ENCODE measurements at regions of chr6 and their contacts with region 1.

Region 1: GRCh38 chr6:16092140-16092539 is 36.7 kb upstream of the MYLIP start:
- DNase-seq: no peak
- ATAC-seq: no peak
- H3K4me3 ChIP-seq: no peak overlapping the region
- H3K27ac ChIP-seq: no peak overlapping the region
- H3K4me1 ChIP-seq: no peaks in the 10 kb centered on the region
- H3K27me3 ChIP-seq: no peaks in the 10 kb centered on the region
- CTCF ChIP-seq: no peak
- EP300 ChIP-seq: no peak
- POLR2A ChIP-seq: no peak
- RAD21 ChIP-seq: no peak

Region 2: GRCh38 chr6:16078064-16078463 is 14.1 kb before region 1 on chr6:
- CTCF ChIA-PET with region 1: interaction called, 5 read pairs
- POLR2A ChIA-PET with region 1: interaction called, 6 read pairs
- RAD21 ChIA-PET with region 1: interaction called, 7 read pairs
- SMC1A ChIA-PET with region 1: interaction called, 14 read pairs
- in situ Hi-C with region 1: no loop called
- intact Hi-C with region 1: no loop called
- DNase-seq: peak; percentile 44
- ATAC-seq: peak; percentile 87
- H3K4me3 ChIP-seq: no peak overlapping the region
- H3K27ac ChIP-seq: no peak overlapping the region
- H3K4me1 ChIP-seq: peaks cover 12% of the 10 kb centered on the region
- H3K27me3 ChIP-seq: no peaks in the 10 kb centered on the region
- CTCF ChIP-seq: no peak
- EP300 ChIP-seq: no peak
- POLR2A ChIP-seq: no peak
- RAD21 ChIP-seq: 0 out of 2 replicates have a peak, but pooled peaks have one; percentile 1

Region 3: DNA sequence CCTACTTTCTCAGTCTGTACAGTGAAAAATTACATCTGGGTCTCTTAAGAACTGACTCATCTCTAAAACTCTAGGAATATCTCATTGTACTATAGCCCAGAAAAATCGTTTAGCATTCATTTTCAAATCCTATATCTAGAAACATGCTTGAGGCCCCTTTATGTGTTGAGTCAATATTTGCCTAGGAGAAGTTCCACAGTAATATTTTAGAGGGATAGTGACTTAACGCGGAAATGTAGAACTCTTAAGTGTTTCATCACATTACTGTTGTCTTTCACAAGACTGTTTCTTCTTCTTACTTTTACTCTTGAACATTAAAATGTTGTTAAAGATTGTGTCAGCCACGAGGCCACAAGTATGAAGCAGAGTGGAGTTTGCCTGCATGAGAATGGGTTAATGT is 13.7 kb after region 1 on chr6:
- CTCF ChIA-PET with region 1: interaction called, 10 read pairs
- POLR2A ChIA-PET with region 1: no interaction called
- RAD21 ChIA-PET with region 1: interaction called, 11 read pairs
- SMC1A ChIA-PET with region 1: interaction called, 7 read pairs
- in situ Hi-C with region 1: no loop called
- intact Hi-C with region 1: no loop called
- DNase-seq: no peak
- ATAC-seq: no peak
- H3K4me3 ChIP-seq: no peak overlapping the region
- H3K27ac ChIP-seq: no peak overlapping the region
- H3K4me1 ChIP-seq: no peaks in the 10 kb centered on the region
- H3K27me3 ChIP-seq: no peaks in the 10 kb centered on the region
- CTCF ChIP-seq: no peak
- EP300 ChIP-seq: no peak
- POLR2A ChIP-seq: no peak
- RAD21 ChIP-seq: no peak

Region 4: DNA sequence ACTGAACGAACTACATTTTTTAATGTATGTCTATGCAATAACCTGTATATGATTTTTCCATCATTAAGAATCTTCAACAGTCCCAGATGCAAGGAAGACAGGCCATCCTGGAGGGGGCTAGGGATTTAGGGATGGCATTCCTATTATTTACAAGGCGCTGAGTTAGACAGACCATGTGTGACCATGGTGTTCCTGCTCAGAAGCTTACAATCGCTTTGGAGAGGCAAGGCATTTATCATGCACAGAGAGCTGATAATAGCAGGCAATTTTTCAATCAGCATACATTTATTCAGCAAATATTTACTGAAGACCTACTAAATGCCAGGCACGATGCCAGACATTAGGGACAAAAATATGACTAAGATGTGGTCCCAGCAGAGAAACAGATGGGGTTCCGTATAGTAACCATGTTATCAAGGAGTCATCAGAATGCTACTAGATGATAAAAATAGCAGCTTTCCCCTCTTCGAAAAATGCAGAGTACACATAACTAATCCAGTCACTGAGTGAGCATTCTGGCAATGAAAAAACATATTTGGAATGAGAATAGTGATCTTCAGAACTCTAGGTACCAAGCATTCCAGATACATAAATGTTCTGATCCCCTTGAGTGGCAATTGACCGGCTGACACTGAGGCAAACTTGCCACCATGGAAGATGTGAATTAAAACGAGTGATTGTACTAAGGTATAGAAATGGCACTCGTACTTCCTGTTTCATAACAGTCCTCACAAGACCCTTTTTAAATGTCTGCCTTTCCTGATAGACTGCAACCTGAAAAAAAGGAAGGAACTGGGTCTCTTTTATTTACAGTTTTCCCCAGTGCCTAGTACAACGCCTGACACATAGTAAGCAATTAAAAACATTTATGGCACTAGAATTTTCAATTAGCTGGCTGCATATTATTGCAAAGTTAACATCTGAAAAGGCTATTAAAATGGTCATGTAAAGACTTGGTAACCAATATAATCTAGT is 533.4 kb after region 1 on chr6:
- CTCF ChIA-PET with region 1: no interaction called
- POLR2A ChIA-PET with region 1: no interaction called
- RAD21 ChIA-PET with region 1: no interaction called
- SMC1A ChIA-PET with region 1: no interaction called
- in situ Hi-C with region 1: no loop called
- intact Hi-C with region 1: no loop called
- DNase-seq: no peak
- ATAC-seq: no peak
- H3K4me3 ChIP-seq: no peak overlapping the region
- H3K27ac ChIP-seq: no peak overlapping the region
- H3K4me1 ChIP-seq: peaks cover 11% of the 10 kb centered on the region
- H3K27me3 ChIP-seq: no peaks in the 10 kb centered on the region
- CTCF ChIP-seq: no peak
- EP300 ChIP-seq: no peak
- POLR2A ChIP-seq: no peak
- RAD21 ChIP-seq: no peak